Activated naive CD4-positive, alpha-beta T cell treated with anti-CD3 and anti-CD28 coated beads, Interleukin-2, amount 10 ng/mL, durations not matched to agents 7 days and 5 days (primary cell): ENCODE measurements at regions of chr20 and their contacts with region 1.

Region 1: DNA sequence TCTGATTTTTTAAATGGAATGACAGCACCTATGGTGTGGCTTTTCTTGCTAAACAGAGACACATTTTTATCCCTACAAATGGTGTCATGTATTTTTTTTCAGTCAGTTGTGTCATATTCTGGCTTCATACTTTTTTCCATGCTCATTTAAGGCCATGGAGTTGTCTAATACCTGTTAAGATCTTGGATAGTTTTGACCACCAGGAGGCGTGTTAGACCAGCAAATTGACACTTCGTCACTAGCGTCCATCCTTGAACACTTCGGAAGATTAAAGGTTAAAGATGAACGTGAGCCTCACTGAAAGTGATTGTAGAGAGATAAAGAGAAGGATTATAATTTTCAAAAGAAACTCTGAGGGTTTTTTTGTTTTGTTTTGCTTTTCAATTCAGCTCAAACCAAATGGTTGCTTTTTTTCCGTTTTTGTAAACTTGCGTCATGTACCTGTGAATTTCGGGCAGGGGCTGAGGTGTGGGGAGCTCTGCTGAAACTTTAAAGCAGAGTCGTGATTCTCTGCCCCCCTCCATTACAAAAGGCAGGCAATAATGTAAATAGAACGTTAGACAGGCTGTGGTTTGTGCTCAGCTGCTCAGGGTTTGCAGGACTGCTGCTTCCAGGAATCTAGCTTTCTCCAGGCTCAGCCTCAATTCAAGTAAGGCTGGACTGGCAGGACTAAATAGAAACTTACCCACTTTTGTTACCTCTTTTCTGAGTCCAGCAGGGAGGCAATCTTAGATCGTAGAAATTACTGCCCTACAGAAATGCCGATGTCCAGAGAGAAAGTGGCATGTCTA is 245.1 kb downstream of the FOXA2 start:
- DNase-seq: peak; percentile 59
- H3K4me3 Mint-ChIP-seq: no peak overlapping the region
- H3K27ac Mint-ChIP-seq: no peak overlapping the region
- H3K4me1 Mint-ChIP-seq: peaks cover 2% of the 10 kb centered on the region
- H3K27me3 Mint-ChIP-seq: peaks cover 8% of the 10 kb centered on the region

Region 2: GRCh38 chr20:22586645-22587310 is 247.5 kb after region 1 on chr20:
- CTCF ChIA-PET with region 1: interaction called, 24 read pairs
- DNase-seq: no peak
- H3K4me3 Mint-ChIP-seq: no peak overlapping the region
- H3K27ac Mint-ChIP-seq: no peak overlapping the region
- H3K4me1 Mint-ChIP-seq: no peaks in the 10 kb centered on the region
- H3K27me3 Mint-ChIP-seq: peaks cover 71% of the 10 kb centered on the region

Region 3: DNA sequence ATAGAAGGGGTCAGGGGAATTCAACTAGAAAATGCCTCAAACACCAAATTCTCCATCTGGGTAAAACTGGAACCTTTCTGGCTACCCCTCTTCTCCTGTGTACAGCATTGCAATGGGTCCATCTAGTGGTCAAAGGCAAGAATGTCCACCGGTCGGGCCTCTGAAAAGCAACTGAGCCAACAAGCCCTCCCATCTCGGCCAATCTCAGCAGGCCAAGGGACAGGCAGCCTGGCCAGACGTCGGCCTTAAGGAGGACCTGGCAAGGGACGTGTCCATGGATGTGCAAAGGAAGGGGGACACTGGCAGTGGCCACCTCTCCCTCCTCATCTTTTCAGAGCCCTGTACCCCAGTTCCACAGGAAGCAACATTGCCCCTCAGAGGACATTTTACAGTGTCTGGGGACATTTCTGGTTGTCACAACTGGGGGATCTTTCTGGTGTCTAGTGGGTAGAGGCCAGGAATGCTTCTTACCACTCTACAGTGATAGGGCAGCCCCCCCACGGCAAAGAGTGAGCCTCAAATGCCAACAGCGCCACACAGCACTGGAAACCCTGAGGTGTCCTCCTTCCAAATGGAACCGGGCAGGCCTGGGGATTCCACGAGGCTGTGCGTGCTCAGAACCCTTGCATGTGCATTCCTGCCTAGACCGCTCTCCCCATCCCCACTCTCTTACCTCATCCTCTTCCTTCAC is 344.9 kb after region 1 on chr20:
- CTCF ChIA-PET with region 1: interaction called, 29 read pairs
- DNase-seq: peak; percentile 47
- H3K4me3 Mint-ChIP-seq: no peak overlapping the region
- H3K27ac Mint-ChIP-seq: no peak overlapping the region
- H3K4me1 Mint-ChIP-seq: peaks cover 2% of the 10 kb centered on the region
- H3K27me3 Mint-ChIP-seq: no peaks in the 10 kb centered on the region